Sciatic nerve (tissue), 2 donors: ENCODE measurements at regions of chr1 and their contacts with region 1.

Region 1: GRCh38 chr1:204363335-204364124 is 3.8 kb upstream of the PLEKHA6 start:
- DNase-seq: peak; percentile 79
- ATAC-seq: peak; percentile 77

Region 2: DNA sequence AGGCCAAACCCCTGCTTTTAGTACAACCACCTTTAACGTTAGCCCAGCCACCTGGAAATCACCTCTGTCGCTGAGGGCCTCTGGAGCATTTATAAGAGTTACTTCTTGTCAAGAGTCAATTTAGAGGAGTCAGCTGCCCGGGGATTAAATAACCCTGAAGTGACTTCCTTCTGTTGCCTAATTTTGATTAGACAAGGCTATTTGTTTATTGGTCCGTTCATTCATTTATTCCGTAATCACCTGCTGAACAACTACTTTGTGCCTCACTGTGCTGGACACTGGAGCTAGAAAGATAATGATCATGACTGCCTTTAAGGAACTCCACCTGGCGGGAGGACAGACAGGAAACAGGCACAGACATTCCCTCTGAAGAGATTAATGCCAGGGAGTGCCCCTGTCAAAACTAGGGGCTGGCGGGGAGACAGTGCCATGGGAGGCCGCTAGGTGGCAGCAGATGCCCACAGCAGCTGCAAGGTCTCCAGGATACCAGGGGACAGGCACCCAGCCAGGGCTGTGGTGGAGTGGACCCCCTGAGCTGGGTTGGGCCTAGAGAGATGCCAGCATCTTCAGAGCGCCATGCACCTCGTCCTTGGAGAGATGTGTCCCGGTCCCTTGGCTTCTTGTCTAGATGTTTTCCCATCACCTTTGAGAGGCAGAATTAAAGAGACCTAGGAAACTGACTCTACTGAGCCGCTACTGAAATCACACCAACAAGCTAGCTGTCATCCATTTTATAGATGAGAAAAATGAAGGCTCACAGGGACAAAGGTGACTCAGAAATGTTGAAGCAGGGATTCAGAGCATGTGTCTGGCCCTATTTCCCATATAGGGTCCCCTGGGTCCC is 201.1 kb before region 1 on chr1:
- intact Hi-C with region 1: loop called (anchors 5 kb)
- DNase-seq: peak; percentile 88
- ATAC-seq: peak; percentile 89

Region 3: DNA sequence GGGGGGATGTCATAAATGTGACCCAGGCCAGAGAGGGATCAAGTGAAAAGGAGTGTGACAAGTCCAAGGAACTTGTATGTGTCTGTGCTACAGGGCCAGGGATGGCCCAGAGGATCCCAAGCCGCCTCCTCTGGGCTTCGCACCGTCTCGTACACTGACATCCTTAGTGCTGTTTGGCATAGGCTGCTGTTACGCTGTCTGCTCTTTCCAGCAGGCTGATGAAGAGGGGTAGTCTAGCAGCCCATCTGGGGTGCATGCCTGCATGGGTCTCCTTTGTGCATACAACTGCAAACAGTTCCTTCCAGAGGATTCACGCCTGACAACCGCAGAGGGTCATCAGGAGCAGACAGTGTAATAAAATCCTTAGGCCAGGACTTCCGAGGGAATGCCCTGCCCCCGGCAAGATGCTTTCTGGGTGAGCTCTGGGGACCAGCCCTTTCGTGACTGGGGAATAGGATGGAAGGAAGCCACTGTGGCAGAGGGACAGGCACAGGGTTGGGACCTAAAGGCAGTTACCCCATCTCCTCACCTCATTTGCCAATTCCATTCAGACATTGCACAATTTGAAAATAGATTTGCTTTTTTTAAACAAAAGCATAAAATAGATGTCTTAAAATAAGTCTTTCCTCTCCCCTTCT is 143.4 kb before region 1 on chr1:
- intact Hi-C with region 1: loop called (anchors 5 kb)
- DNase-seq: no peak
- ATAC-seq: peak; percentile 72